Endothelial cell of umbilical vein (primary cell): ENCODE measurements at regions of chr18 and their contacts with region 1.

Region 1: GRCh38 chr18:40413160-40413559 is 1541.9 kb upstream of the PIK3C3 start:
- DNase-seq: peak; percentile 69
- H3K4me3 ChIP-seq: no peak overlapping the region
- H3K27ac ChIP-seq: no peak overlapping the region
- H3K4me1 ChIP-seq: no peaks in the 10 kb centered on the region
- H3K27me3 ChIP-seq: no peaks in the 10 kb centered on the region
- CTCF ChIP-seq: peak; percentile 50 to 72
- POLR2A ChIP-seq: no peak

Region 2: DNA sequence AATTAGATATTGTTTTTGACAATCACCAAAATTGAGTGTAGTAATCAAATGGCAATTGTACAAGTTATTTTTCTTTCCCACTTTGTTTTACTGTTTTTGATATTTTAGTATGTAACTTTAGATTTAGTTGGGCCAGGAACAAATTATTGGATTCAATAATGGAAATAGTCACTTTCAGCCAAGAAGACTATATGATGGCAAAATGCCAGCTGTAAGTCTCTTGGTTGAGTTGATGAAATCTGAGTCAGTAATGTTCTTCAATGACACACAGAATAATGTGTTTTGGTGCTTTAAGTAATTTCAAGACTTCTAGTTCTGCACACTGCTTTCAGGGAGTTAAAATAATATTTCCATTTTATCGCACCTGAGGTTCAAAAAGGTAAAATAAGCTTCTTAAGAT is 825.6 kb before region 1 on chr18:
- CTCF ChIA-PET with region 1: no interaction called
- POLR2A ChIA-PET with region 1: no interaction called
- dilution Hi-C with region 1: no loop called
- intact Hi-C with region 1: loop called (anchors 10 kb)
- DNase-seq: no peak
- H3K4me3 ChIP-seq: no peak overlapping the region
- H3K27ac ChIP-seq: no peak overlapping the region
- H3K4me1 ChIP-seq: no peaks in the 10 kb centered on the region
- H3K27me3 ChIP-seq: no peaks in the 10 kb centered on the region
- CTCF ChIP-seq: no peak
- POLR2A ChIP-seq: no peak

Region 3: DNA sequence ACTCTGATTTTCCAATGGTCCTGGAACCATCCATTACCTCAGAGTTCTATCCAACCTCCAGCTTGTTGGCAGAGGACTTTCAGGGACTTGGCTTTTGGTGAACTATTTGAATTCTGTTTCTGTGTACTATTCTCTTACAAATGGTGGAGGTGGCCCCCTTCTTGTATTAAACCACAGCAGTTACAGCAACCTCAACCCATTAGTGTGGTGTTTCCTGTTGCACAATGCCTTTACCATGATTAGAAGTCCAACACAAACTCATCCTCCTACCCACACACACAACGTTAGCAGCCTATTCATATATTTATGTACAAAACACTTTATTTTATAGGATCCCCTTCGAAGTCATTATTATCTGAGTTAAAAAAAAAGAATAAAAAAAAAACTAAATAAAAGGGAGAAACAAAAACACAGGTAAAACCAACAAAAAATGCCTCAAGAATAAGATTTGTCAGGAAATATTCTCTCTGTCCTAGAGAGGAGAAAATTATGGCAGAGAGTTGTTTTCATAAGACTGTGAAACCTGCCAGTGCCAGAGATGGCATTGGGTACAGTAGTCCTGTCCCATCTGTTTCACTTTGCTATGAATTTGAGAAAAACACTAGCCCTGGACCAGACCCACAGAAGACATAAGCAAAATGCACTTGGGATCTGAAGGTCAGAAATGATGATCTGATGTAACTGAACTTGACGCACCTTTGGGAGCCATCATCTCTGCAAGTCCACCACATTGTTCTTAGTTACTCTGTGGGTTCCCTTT is 354.2 kb before region 1 on chr18:
- CTCF ChIA-PET with region 1: no interaction called
- POLR2A ChIA-PET with region 1: no interaction called
- dilution Hi-C with region 1: no loop called
- intact Hi-C with region 1: no loop called
- DNase-seq: no peak
- H3K4me3 ChIP-seq: no peak overlapping the region
- H3K27ac ChIP-seq: no peak overlapping the region
- H3K4me1 ChIP-seq: no peaks in the 10 kb centered on the region
- H3K27me3 ChIP-seq: peaks cover 0 to 2% of the 10 kb centered on the region in 2 experiments
- CTCF ChIP-seq: no peak
- POLR2A ChIP-seq: no peak

Region 4: DNA sequence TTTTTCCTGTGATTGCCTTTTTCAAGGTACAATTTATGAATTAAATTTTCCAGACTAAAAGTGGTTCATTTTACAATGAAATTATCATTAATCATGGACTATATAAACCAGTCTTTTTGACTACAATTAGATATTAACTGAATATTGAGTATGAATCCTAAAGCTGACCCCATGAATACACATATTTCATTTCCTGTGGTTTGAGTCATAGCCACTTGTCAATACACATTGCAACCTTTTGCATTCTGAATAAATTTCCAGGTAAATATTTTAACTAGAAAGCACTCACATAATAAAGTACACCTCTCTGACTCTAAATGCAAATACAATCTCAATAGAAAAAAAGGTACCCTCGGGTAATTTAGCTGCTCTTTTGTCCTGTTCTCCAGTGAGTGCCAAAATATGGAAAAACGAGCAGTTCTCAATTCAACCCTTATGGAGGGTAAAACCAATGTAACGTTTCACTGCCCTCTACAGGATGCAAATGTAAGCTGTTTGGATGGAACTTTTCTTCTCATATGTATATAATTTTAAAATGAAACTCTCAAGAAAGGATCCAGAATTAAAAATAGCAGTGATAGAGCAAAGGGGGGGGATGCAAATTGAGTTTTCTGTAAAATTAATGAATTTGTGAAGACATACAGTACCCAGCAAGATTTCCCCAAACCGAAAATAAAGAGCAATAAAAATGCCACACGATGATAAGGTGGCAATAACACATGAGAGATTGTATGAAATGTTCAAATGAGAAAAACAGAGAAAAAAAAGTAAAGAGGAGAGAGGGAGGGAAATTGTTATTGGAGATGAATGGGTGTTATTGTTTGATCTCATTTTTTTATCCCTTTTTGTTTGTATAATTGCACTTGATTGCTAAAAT is 253.8 kb before region 1 on chr18:
- CTCF ChIA-PET with region 1: interaction called, 17 read pairs
- POLR2A ChIA-PET with region 1: no interaction called
- dilution Hi-C with region 1: no loop called
- intact Hi-C with region 1: loop called (anchors 5 kb)
- DNase-seq: peak; percentile 63
- H3K4me3 ChIP-seq: no peak overlapping the region
- H3K27ac ChIP-seq: no peak overlapping the region
- H3K4me1 ChIP-seq: peaks cover 6% of the 10 kb centered on the region
- H3K27me3 ChIP-seq: no peaks in the 10 kb centered on the region
- CTCF ChIP-seq: peak; percentile 44 to 63
- POLR2A ChIP-seq: no peak

Region 5: DNA sequence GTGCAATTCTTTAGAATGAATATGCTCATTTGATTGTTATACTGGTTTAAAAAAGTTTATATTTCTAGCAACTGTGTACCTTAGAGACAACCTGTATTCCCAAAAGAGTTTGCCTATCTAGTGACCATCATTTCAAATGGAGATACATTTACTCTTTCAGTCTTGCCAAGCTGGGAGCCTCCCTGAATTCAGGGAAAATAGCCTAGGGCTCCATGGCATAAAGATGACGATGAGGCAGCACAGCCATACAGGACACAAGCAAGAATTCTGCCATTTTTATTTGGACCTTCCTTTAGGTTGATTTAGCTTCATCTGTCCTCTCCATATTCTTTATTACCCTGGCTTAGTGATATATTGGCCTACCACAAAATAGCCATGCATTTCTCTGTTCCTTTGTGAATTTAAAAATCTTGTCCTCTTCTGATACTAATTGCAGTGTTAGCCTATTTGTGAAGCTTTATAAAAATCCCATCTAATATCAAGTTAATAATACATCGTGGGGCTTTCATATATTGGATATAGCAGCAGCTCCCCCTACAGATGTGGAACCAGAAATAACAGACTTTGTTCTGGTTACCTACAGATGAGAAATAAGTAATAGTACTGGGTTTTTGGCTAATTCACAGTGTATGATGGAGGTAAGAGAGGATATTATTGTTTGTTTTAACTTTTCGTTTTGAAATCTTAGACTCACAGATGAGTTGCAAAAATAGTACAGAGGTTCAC is 120.0 kb before region 1 on chr18:
- CTCF ChIA-PET with region 1: interaction called, 5 read pairs
- POLR2A ChIA-PET with region 1: no interaction called
- dilution Hi-C with region 1: no loop called
- intact Hi-C with region 1: loop called (anchors 10 kb)
- DNase-seq: no peak
- H3K4me3 ChIP-seq: no peak overlapping the region
- H3K27ac ChIP-seq: no peak overlapping the region
- H3K4me1 ChIP-seq: no peaks in the 10 kb centered on the region
- H3K27me3 ChIP-seq: no peaks in the 10 kb centered on the region
- CTCF ChIP-seq: peak in 1 of 2 donors; percentile 12
- POLR2A ChIP-seq: no peak

Region 6: DNA sequence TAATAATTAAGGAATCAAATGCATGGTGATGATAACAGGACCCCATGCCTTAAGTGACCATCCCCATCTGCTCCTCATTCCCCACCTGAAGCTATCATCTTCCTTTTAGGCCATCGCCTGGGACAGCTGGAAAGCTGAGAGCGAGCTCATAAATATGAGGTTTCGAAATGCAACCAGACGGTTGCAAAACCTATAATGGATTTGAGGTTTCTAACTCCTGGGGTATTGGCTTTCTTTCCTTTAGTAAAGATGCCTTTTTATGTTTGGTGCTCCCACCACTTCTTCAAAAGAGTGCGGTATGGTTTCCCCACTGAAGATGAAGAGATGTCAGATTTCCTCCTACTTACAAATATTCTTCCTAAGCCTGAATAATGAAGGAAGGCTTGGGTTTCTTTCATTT is 47.6 kb before region 1 on chr18:
- CTCF ChIA-PET with region 1: no interaction called
- POLR2A ChIA-PET with region 1: no interaction called
- dilution Hi-C with region 1: no loop called
- intact Hi-C with region 1: loop called (anchors 5 kb)
- DNase-seq: no peak
- H3K4me3 ChIP-seq: no peak overlapping the region
- H3K27ac ChIP-seq: peak overlapping the region; percentile 52
- H3K4me1 ChIP-seq: peaks cover 36% of the 10 kb centered on the region
- H3K27me3 ChIP-seq: no peaks in the 10 kb centered on the region
- CTCF ChIP-seq: no peak
- POLR2A ChIP-seq: no peak